ENCODE measurements at regions of chr9 and their contacts with region 1.

Region 1: GRCh38 chr9:134807716-134808444 is 72.7 kb upstream of the FCN2 start:
- DNase-seq: no peak
- ATAC-seq: peak; percentile 27 to 30
- H3K4me3 ChIP-seq: no peak overlapping the region
- H3K27ac ChIP-seq: peak overlapping the region in 2 of 4 donors; percentile 18 to 28
- H3K4me1 ChIP-seq: peaks cover 9 to 13% of the 10 kb centered on the region in 2 donors
- H3K27me3 ChIP-seq: no peaks in the 10 kb centered on the region
- CTCF ChIP-seq: no peak
- POLR2A ChIP-seq: no peak

Region 2: GRCh38 chr9:134896005-134896833 is 88.3 kb after region 1 on chr9:
- in situ Hi-C with region 1: no loop called
- intact Hi-C with region 1: loop called (anchors 10 kb)
- DNase-seq: peak; percentile 35 to 46
- ATAC-seq: peak; percentile 77 to 84
- H3K4me3 ChIP-seq: no peak overlapping the region
- H3K27ac ChIP-seq: peak overlapping the region; percentile 58 to 83 (median 71)
- H3K4me1 ChIP-seq: peaks cover 3 to 35% of the 10 kb centered on the region in 2 donors
- H3K27me3 ChIP-seq: no peaks in the 10 kb centered on the region
- CTCF ChIP-seq: no peak
- POLR2A ChIP-seq: no peak

Measured in gastrocnemius medialis (tissue), 4 donors.